A673 (cell line): ENCODE measurements at regions of chr5 and their contacts with region 1.

Region 1: GRCh38 chr5:33936004-33936380 is 194 bp upstream of the RXFP3 start:
- DNase-seq: peak; percentile 78
- H3K4me3 ChIP-seq: peak overlapping the region; percentile 17
- H3K27ac ChIP-seq: no peak overlapping the region
- H3K4me1 ChIP-seq: no peaks in the 10 kb centered on the region
- H3K27me3 ChIP-seq: peaks cover 57% of the 10 kb centered on the region
- CTCF ChIP-seq: no peak; the same call in 1 of the 2 replicates

Region 2: DNA sequence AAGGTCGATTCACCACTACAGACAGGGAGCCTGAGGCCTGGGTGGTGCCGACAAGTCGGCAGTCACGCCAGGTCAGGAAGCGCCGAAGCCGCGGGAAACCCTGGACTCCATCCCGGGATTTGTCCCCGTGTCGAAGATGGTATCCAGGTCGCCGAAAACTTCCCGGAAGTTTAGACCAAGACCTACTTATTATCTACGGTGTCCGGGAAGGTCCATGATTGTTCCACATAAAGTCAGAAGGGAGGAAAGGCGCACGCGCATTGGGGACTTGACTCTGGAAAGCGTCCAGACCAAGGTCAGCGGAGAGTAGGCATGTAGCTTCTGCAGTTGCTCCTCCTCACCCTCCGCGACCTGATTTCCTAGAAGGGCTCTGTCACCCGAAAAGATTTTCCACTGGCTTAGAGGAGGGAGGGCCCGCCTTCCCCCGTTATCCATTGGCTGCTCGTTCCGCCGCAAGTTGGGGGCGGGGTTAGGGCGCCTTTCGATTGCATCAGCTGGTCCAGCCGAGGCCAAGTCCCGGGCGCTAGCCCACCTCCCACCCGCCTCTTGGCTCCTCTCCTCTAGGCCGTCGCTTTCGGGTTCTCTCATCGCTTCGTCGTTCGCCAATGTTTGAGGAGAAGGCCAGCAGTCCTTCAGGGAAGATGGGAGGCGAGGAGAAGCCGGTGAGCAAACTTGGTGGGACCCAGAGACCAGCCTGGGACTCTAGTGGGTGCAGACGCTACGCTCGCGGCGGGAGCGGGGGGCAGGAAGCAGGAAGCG is 495.3 kb before region 1 on chr5 and contains the start of gene TARS1:
- CTCF ChIA-PET with region 1: interaction called, 9 read pairs
- POLR2A ChIA-PET with region 1: no interaction called
- intact Hi-C with region 1: loop called (anchors 2 kb)
- DNase-seq: peak; percentile 99
- H3K4me3 ChIP-seq: peak within 1 kb of the TSS; percentile 74
- H3K27ac ChIP-seq: peak within 1 kb of the TSS; percentile 96
- H3K4me1 ChIP-seq: peaks cover 17% of the 10 kb centered on the region
- H3K27me3 ChIP-seq: no peaks in the 10 kb centered on the region
- CTCF ChIP-seq: no peak
- total RNA-seq, gene TARS1: 324 and 333 TPM in 2 replicates

Region 3: GRCh38 chr5:33470544-33470943 is 465.4 kb before region 1 on chr5:
- CTCF ChIA-PET with region 1: interaction called, 24 read pairs
- POLR2A ChIA-PET with region 1: no interaction called
- intact Hi-C with region 1: loop called (anchors 1 kb)
- DNase-seq: peak; percentile 73
- H3K4me3 ChIP-seq: no peak overlapping the region
- H3K27ac ChIP-seq: no peak overlapping the region
- H3K4me1 ChIP-seq: peaks cover 6% of the 10 kb centered on the region
- H3K27me3 ChIP-seq: no peaks in the 10 kb centered on the region
- CTCF ChIP-seq: peak; percentile 80

Region 4: DNA sequence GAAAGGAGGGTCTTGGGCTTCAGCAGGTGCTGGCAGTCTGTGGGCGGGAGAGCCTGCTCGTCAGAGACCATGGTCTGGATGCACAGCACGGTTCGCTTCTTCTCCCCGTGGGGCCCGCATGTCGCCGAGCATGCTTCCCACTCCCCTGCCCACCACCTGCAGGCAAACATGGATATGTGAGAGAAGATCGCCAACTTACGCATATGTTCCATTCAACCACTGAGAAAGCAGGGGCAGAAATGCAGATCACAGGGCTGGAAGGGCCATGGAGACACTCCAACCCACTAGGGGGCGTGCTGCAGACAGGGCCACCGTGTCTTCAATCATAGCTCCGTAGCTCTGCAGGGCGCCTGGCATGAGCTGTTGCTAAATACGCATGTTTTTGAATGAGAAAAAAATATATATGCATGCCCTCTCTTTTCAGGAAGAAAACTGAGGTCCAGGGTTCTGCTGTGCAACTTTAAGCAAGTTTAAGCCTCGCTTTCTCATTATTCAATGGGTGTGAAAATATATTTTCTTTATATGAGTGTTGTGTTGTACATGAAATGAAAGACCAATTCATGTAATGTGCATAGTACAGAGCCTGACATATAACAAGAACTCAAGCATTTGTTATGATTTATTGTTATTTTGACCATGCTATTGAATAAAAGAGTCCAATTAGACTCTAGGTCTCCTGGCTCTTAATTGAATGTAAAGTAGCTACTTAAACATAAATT is 347.2 kb before region 1 on chr5:
- CTCF ChIA-PET with region 1: interaction called, 15 read pairs
- POLR2A ChIA-PET with region 1: no interaction called
- intact Hi-C with region 1: loop called (anchors 2 kb)
- DNase-seq: peak; percentile 72
- H3K4me3 ChIP-seq: no peak overlapping the region
- H3K27ac ChIP-seq: no peak overlapping the region
- H3K4me1 ChIP-seq: no peaks in the 10 kb centered on the region
- H3K27me3 ChIP-seq: no peaks in the 10 kb centered on the region
- CTCF ChIP-seq: peak; percentile 80

Region 5: GRCh38 chr5:33761139-33761538 is 174.9 kb before region 1 on chr5:
- CTCF ChIA-PET with region 1: no interaction called
- POLR2A ChIA-PET with region 1: no interaction called
- intact Hi-C with region 1: no loop called
- DNase-seq: no peak
- H3K4me3 ChIP-seq: no peak overlapping the region
- H3K27ac ChIP-seq: no peak overlapping the region
- H3K4me1 ChIP-seq: no peaks in the 10 kb centered on the region
- H3K27me3 ChIP-seq: no peaks in the 10 kb centered on the region
- CTCF ChIP-seq: no peak

Region 6: DNA sequence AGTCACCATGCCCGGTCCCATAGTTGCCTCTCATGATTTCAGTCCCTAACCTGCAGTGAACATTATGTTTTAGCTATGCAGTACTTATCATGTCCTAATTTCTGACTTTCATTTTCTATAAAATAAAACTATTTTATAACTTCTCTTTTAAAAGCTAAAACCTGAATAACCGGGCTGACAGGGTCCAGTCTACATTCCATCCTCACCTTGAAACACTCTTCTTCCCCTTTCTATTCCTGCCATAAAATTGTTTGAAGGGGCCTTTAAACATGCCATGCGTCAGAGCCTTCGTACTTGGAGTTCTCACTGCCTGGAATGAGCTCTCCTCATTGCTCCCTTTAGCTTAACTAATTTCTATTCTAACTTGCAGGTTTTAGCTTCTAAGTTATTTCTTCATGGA is 1437.2 kb after region 1 on chr5:
- CTCF ChIA-PET with region 1: no interaction called
- POLR2A ChIA-PET with region 1: no interaction called
- intact Hi-C with region 1: no loop called
- DNase-seq: no peak
- H3K4me3 ChIP-seq: no peak overlapping the region
- H3K27ac ChIP-seq: no peak overlapping the region
- H3K4me1 ChIP-seq: no peaks in the 10 kb centered on the region
- H3K27me3 ChIP-seq: no peaks in the 10 kb centered on the region
- CTCF ChIP-seq: no peak